Activated CD4-positive, alpha-beta T cell treated with anti-CD3 and anti-CD28 coated beads, Interleukin-2, amount 10 ng/mL, durations not matched to agents 24 days and 14 days (primary cell): ENCODE measurements at regions of chr1 and their contacts with region 1.

Region 1: DNA sequence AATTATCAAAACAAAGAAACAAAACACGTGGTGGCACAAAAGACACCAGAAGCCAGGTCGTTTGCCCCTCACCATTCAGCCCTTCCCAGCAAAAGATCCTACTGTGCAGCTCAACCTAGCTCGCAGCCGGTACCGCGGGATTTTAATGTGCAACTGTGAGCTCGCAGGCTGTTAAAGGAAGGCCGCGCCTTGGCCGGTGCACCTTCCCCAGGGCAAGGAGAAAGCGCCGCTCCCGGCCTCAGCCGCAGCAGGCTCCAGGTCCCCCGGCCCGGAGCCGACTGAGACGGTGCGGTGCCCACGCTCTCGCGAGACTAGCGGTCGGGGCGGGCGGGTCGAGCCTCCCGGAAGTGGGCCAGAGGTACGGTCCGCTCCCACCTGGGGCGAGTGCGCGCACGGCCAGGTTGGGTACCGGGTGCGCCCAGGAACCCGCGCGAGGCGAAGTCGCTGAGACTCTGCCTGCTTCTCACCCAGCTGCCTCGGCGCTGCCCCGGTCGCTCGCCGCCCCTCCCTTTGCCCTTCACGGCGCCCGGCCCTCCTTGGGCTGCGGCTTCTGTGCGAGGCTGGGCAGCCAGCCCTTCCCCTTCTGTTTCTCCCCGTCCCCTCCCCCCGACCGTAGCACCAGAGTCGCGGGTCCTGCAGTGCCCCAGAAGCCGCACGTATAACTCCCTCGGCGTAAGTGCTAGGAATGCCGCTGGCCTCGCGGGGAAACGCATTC is at the start of gene AGL:
- DNase-seq: peak; percentile 96
- H3K4me3 Mint-ChIP-seq: peak within 1 kb of the TSS; percentile 97
- H3K27ac Mint-ChIP-seq: peak within 1 kb of the TSS; percentile 90
- H3K4me1 Mint-ChIP-seq: peaks cover 15% of the 10 kb centered on the region
- H3K27me3 Mint-ChIP-seq: peaks cover 5% of the 10 kb centered on the region
- total RNA-seq, gene AGL: 12.9 and 13.7 TPM in 2 replicates

Region 2: DNA sequence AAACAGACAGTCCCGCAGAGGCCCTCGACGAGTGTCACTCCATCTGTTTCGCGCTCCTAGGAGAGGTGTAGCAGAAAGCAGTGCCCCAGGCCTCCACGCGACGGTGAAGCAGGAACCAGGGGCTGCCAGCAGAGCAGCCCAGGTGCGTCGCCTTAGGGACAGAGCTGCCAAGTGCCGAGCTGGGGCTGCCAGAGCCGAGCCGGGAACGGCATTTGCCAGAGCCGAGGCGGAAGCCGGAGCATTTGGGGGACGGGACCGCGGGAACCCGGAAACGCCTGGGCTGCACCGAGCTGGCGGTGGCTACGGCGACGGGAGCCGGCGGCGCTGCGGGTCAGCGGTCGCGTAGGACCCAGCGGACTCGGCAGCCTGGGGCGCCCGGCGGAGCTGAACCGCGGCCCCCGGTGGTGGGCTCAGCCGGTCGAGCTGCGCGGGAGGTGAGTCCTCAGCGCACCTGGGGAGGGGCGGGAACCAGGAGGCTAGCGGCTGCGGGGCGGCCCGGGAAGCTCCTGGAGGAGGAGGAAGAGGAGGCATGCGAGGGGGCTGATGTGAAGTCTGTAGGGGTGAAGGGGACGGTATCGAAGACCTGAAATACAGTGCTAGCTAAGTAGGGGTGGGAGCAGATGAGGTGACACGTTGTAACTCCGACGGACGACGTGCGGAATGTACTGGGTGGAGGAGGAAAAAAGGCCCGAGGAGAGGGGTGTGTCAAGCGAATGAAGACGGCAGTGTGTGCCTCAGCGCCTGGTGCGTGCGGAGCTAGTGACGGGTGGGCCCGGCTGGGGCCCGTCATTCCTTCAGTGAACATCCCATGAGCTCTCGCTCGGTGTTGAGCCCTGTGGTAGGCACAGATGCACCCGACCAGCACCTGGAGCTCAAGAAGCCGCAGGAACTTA is 120.1 kb after region 1 on chr1 and contains the start of gene SLC35A3:
- intact Hi-C with region 1: loop called (anchors 2 kb)
- DNase-seq: peak; percentile 94
- H3K4me3 Mint-ChIP-seq: peak within 1 kb of the TSS; percentile 97
- H3K27ac Mint-ChIP-seq: peak within 1 kb of the TSS; percentile 98
- H3K4me1 Mint-ChIP-seq: peaks cover 16% of the 10 kb centered on the region
- H3K27me3 Mint-ChIP-seq: no peaks in the 10 kb centered on the region
- total RNA-seq, gene SLC35A3: 15.7 and 17.4 TPM in 2 replicates

Region 3: DNA sequence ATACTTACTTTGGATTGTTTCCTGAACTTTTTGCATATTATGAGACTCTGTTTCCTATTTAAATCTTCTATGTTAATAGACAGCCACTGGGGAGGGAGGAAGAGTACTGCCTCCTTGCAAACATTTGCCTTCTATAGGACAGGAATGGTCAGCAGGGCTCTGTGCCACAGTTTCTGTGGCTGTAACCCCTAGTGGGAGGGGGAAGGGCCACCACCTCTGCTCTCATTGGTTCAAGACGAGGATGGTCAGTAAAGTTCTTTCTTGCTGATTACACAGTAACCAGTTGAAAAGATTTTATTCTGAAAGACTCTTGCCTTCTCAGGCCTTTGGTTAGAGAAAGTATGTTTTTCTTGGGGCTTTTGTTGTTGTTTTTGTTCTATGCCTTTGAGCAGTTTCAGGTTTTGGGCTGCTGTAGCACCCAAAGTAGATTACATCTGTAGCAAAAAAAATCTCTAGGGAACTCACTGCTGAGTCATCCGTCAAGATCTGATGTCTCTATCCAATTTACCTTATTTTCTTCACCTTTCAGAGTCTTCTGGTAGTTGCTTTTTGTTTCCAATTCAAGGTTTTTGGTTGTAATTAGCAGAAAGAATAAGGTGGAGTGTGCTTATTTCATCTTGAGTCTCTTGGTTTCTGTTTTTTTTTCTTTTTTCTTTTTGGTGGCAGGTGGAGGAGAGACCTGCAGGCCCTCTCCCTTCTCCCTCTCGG is 143.0 kb after region 1 on chr1:
- intact Hi-C with region 1: no loop called
- DNase-seq: no peak
- H3K4me3 Mint-ChIP-seq: no peak overlapping the region
- H3K27ac Mint-ChIP-seq: no peak overlapping the region
- H3K4me1 Mint-ChIP-seq: peaks cover 6% of the 10 kb centered on the region
- H3K27me3 Mint-ChIP-seq: no peaks in the 10 kb centered on the region